ENCODE measurements at regions of chrX and their contacts with region 1.

Region 1: GRCh38 chrX:102934624-102935023 is 2.4 kb upstream of the RAB40AL start:
- DNase-seq: peak; percentile 18
- H3K4me3 ChIP-seq: no peak overlapping the region
- H3K27ac ChIP-seq: no peak overlapping the region
- H3K4me1 ChIP-seq: no peaks in the 10 kb centered on the region
- H3K27me3 ChIP-seq: no peaks in the 10 kb centered on the region
- CTCF ChIP-seq: peak; percentile 13 to 71 (median 50)
- EP300 ChIP-seq: no peak
- POLR2A ChIP-seq: no peak

Region 2: GRCh38 chrX:103157496-103158320 is 223.1 kb after region 1 on chrX:
- in situ Hi-C with region 1: loop called in 1 of 4 experiments (anchors 25 kb)
- intact Hi-C with region 1: no loop called
- DNase-seq: no peak
- H3K4me3 ChIP-seq: no peak overlapping the region
- H3K27ac ChIP-seq: no peak overlapping the region
- H3K4me1 ChIP-seq: peaks cover 0 to under 1% (median 0%) of the 10 kb centered on the region in 4 donors
- H3K27me3 ChIP-seq: no peaks in the 10 kb centered on the region
- CTCF ChIP-seq: peak; percentile 32 to 51 (median 40)
- EP300 ChIP-seq: no peak
- POLR2A ChIP-seq: no peak

Region 3: DNA sequence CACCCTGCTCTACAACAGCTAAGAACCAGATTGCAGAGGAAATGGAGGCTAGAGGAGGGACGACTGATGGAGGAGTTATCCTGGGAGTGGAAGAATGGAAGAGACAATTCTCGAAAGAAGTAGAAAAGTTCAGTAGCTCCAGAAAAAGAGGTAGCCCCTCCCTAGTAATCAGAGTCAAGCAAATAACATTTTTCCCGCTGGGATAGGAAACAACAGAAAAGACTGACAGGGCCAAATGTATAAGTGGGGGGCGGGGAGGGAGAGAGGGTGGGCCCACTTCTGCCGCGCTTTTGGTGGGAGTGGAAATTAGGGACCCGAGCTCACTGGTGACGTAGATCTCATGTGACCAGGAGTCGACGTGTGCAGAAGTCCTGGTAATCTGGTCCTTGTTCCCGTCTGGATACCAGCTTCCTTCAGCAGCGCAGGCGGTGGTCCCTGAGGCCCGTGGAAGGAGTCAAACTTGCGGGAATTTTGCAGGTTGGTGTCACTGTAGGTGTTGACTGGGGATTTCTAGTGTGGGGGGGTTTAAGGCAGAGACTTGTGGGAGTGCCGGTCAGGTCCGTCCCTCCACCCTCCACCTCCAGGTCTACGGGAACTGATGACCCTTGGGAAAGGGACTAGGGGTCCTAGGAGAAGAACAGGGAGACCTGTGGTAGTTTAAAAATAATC is 421.6 kb after region 1 on chrX and contains the start of gene TCEAL9:
- in situ Hi-C with region 1: no loop called
- intact Hi-C with region 1: no loop called
- DNase-seq: peak; percentile 63
- H3K4me3 ChIP-seq: peak within 1 kb of the TSS; percentile 43 to 74 (median 64)
- H3K27ac ChIP-seq: peak within 1 kb of the TSS; percentile 87 to 92 (median 88)
- H3K4me1 ChIP-seq: no peaks in the 10 kb centered on the region
- H3K27me3 ChIP-seq: no peaks in the 10 kb centered on the region
- CTCF ChIP-seq: no peak
- EP300 ChIP-seq: no peak
- POLR2A ChIP-seq: peak; percentile 80
- total RNA-seq, gene TCEAL9: 18.3 to 64.1 (median 26.5) TPM